HEK293T (cell line): ENCODE measurements at regions of chr18 and their contacts with region 1.

Region 1: DNA sequence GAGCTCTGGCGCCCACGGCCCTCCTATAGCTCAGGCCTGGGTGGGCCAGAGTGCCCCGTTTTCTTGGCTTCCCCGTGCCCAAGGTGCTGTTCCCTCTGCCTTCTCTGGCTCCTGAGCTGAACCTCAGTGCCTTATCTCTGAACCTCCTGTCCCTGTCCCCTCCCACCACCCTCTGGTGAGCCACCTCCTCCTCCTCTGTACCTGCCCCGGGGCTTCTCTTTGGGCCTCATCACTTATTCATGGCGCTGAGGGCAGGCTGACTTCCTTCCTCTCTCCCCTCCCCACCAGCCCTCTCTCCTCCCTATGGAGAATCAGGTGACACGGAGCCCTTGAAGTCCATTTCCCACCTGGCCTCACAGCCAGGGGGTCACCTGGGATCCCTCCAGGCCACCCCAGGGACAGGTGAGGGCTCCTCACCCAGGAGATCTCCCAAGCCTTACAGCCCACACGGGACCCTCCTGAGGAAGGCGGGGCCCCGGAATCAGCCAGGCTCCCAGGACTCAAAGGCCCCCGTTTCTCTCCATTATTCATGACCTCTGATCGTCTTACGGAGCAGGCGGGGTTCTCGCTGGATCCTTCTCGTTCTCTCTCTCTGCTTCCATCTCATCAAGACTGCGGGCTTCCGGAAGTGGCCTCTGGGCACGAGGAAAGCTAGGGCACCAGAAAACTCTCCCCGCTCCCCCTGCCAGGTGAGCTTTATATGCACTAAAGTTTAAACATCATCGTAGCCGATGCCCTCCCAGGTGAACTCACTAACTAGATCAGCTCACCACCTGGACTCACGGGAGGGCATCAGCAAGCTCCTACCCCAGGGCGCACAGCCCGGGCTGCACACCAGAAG is at the start of gene LOXHD1:
- DNase-seq: no peak

Region 2: DNA sequence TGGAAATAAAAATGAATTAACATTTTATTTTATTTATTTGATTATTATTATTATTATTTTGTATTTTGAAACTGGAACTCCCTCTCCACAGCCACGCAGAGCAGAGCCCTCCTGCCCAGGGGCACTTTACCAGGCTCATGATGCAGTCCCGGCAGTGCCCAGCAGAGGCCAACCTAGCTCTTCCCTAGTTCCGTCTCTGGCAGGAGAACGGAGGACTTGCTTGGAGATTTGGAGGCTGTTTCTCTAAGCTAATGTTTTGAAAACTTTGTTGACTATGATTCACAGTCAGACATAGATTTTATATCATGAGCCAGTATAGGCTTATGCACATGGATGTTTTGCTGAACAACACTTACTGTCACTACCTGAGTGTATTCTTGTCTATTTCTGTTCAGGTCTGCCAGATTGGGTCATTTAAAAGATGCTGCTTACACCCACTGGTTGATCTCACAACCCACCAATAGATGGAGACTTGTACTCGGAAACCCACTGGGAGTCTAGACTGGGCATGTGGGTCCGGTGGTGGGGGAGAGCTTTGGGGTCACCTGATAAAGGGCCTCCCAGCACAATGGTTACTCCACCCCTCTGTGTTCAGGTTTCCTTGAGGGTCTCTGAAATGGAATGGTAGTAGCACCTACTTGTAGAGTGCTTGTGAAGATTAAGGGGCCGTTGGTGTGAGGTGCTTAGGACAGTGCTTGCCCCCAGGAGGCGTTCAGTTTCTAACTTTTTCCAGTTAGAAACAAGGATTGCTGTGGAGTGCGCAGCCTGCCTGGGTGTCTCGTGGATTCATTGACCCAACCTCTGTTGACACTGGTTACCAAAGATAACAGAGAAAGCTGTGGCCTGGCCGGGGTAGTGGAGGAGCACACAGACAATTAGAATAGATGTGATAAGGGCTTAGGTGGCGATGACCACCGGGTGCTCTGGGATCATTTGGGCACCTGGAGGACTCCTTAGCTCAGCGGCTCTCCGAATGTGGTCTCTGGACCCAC is 375.9 kb before region 1 on chr18:
- CTCF ChIA-PET with region 1: interaction called, 13 read pairs
- POLR2A ChIA-PET with region 1: no interaction called
- DNase-seq: peak; percentile 67

Region 3: DNA sequence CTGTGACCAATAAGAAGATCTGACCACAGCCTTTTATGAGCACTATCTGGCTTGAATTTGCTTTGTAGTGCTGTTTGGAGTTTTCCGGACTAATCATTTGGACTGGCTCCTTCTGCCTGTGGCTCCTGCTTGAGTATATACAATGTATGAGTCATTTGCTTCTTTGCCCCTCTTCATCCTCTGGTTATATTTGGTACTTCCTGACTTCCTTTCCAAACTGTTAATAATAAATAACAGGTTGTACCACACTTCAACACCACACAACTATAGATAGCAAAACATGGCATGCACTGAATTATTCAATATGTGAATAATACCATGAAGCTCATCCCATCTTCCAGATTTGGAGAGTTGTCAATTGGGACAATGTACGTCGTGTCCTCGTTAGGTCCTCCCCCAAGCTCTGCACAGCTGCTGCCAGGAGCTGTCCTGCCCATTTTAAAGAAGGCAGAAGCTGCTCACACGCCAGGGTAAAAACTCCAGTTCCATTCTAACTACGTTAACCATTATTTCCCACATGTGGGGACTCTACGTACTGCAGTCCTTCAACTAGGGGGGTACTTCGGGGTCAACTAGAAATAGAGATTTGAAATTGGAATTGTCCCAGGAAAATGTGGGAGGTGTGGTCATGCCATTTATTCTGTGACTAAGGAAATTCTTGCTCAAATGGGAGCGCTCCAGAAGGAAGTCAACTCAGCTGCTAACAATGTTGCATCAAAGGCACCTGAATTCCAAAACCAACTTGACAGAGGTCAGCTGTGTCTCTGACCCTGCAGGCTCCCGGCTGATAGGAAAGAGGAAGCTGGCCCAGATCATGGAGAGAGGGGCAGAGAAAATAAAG is 61.4 kb after region 1 on chr18:
- CTCF ChIA-PET with region 1: no interaction called
- POLR2A ChIA-PET with region 1: no interaction called
- DNase-seq: no peak